Gastrocnemius medialis (tissue), 4 donors: ENCODE measurements at regions of chr4 and their contacts with region 1.

Region 1: GRCh38 chr4:166257891-166258290 is 384.9 kb downstream of the TLL1 start:
- DNase-seq: no peak
- ATAC-seq: no peak
- H3K4me3 ChIP-seq: no peak overlapping the region
- H3K27ac ChIP-seq: no peak overlapping the region
- H3K4me1 ChIP-seq: no peaks in the 10 kb centered on the region
- H3K27me3 ChIP-seq: no peaks in the 10 kb centered on the region
- CTCF ChIP-seq: no peak
- POLR2A ChIP-seq: no peak

Region 2: GRCh38 chr4:165945991-165946390 is 311.9 kb before region 1 on chr4:
- in situ Hi-C with region 1: no loop called
- intact Hi-C with region 1: loop called (anchors 10 kb)
- DNase-seq: no peak
- ATAC-seq: no peak
- H3K4me3 ChIP-seq: no peak overlapping the region
- H3K27ac ChIP-seq: no peak overlapping the region
- H3K4me1 ChIP-seq: no peaks in the 10 kb centered on the region
- H3K27me3 ChIP-seq: no peaks in the 10 kb centered on the region
- CTCF ChIP-seq: no peak
- POLR2A ChIP-seq: no peak

Region 3: DNA sequence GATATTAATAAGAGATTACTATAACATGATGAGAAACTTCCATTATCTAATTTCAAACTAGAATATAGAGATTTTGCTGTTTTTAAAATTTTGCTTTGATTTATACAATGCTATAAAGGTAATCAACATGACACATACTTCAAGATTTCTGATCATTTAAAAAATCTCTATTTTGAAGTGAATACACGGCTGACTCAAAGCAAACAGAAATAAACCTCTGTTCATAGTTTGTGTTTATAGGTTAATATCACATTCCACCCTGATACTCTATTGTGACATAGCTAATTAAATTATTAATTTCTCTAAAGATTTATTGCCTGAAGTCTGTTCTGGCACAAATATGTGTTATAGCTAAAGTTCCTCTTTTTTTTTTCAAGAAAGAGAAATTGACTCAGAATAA is 35.6 kb before region 1 on chr4:
- in situ Hi-C with region 1: no loop called
- intact Hi-C with region 1: no loop called
- DNase-seq: no peak
- ATAC-seq: no peak
- H3K4me3 ChIP-seq: no peak overlapping the region
- H3K27ac ChIP-seq: no peak overlapping the region
- H3K4me1 ChIP-seq: no peaks in the 10 kb centered on the region
- H3K27me3 ChIP-seq: no peaks in the 10 kb centered on the region
- CTCF ChIP-seq: no peak
- POLR2A ChIP-seq: no peak